Dorsolateral prefrontal cortex (tissue), 120 donors: ENCODE measurements at regions of chr7 and their contacts with region 1.

Region 1: DNA sequence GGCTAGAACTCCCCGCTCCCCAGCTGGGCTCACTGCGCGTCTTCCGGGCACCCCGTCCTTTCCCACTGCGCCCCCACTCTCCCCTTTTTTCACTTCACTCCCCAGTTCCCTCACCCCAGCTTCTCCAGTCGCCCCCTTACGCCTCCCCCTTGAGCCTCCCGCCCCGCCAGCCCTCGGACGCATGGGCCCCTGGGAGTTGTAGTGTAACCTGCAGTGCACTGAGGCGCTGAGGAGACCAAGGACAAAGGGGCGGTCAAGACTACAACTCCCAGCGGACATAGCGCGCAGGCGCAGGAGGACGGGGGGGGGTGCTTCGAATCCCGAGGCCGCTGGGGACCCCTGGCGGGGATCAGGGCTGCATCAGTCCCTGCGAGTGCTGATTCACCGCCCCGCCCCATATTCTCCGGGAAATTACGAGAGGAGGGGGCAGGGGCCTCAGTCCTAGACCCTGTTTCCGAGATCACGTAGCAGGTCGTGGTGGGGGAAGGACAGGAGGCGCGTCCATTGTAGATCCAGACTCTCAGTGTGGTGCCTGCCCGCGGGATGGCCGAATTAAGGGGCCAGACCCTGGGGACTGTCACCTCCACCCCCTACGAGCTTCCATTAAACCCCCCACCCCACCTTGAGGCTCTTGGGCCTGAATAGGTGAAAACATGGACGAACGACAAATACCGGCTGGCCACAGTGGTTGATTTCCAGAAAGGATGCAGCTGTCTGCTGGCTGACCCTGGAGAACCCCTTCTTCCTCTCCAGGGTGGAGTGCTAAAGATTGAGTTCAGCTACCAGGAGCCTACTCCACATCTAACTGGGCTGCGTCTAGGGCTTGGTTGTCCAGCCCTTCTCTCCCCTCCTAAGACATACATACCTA is 554 bp upstream of the YWHAG start:
- DNase-seq: peak; percentile 93 to 99 (median 98)
- H3K4me3 ChIP-seq: peak overlapping the region; percentile 64 to 100 (median 94)
- H3K27ac ChIP-seq: peak overlapping the region; percentile 88 to 100 (median 98)
- H3K27me3 ChIP-seq: no peaks in the 10 kb centered on the region
- CTCF ChIP-seq: peak; percentile 37 to 93 (median 78)

Region 2: GRCh38 chr7:76291343-76292212 is 67.8 kb before region 1 on chr7:
- intact Hi-C with region 1: loop called in 1 of 2 experiments (anchors 2 kb)
- DNase-seq: peak; percentile 86 to 92 (median 90)
- H3K4me3 ChIP-seq: peak overlapping the region; percentile 4 to 65 (median 46)
- H3K27ac ChIP-seq: peak overlapping the region; percentile 68 to 100 (median 100)
- H3K27me3 ChIP-seq: no peaks in the 10 kb centered on the region
- CTCF ChIP-seq: peak; percentile 35 to 100 (median 97)

Region 3: GRCh38 chr7:76314042-76314721 is 45.2 kb before region 1 on chr7:
- intact Hi-C with region 1: loop called (anchors 1 kb)
- DNase-seq: peak; percentile 93 to 97 (median 96)
- H3K4me3 ChIP-seq: peak overlapping the region in 2 of 59 donors; percentile 6 to 27
- H3K27ac ChIP-seq: peak overlapping the region in 24 of 59 donors; percentile 1 to 81 (median 41)
- H3K27me3 ChIP-seq: no peaks in the 10 kb centered on the region
- CTCF ChIP-seq: peak; percentile 79 to 100 (median 100)

Region 4: DNA sequence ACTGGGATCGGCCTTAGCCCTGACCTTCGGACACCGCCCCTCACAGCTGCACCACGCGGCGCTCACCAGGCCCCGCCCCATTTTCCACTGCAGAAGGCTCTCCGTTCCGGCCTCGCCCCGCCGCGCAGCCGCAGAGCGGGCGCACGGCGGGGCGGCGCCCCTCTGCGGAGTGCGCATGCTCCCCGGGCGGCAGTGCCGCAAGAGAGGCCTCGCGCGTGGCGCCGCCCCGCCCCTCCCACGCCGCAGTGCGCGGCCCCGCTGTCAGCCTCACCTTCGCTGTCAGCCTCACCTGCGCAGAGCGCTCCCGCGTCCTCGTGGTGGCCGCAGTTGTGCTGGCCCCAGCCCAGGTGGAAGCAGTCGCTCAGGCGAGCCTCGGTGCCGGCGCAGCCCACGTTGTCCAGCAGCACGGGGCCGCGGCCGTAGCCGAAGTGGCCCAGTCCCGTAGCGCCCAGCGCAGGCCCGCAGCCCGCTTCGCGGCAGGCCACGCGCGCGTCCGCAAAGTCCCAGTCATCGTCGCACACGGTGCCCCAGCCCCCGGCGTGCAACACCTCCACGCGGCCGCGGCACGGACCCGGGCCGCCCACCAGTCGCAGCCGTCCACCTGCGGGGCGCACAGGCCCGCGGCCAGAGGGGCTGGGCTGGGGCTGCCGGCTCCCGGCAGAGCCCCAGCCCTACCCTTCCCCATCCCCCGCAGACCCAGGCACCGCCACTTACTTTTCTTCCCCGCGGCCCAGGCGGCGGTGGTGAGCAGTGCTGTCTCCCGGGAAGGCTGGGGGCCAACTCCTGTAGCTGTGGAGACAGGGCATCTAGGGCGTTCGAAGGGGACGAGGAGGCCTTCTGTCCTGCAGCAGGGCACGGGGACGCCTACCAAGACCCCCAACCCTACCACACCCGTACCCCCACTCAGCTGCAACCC is 34.0 kb after region 1 on chr7:
- intact Hi-C with region 1: loop called (anchors 1 to 2 kb)
- DNase-seq: peak; percentile 80 to 93 (median 90)
- H3K4me3 ChIP-seq: peak overlapping the region; percentile 49 to 96 (median 79)
- H3K27ac ChIP-seq: peak overlapping the region; percentile 45 to 99 (median 94)
- H3K27me3 ChIP-seq: no peaks in the 10 kb centered on the region
- CTCF ChIP-seq: peak in 19 of 56 donors; percentile 3 to 43 (median 19)

Region 5: DNA sequence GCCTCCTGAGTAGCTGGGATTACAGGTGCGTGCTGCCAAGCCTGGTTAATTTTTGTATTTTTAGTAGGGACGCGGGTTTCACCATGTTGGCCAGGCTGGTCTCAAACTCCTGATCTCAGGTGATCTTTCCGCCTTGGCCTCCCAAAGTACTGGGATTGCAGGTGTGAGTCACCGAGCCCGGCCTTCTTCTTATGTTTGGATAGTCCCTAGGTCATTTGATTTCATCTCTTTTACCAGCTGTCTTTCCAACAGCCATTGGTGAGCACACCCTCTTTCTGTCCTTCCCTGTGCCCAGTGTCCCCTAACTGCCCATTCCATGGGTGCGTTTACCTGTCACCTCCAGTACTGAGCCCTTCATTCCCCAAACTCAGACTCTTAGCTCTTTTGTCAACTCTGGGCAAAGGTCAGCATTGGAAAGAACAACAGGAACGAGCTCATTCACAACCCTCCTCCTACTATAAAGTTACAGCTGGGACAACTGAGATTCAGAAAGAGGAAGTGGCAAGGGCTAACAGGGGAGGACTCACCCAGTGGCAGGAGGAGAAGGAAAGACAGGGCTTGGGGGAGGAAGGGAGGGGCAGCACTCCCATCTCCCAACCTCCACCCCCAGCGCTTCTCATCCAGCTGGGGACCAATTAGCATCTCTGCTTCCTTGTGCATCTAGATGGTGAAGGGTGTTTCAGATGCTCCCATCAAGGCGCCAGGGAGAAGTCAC is 44.6 kb after region 1 on chr7:
- intact Hi-C with region 1: no loop called
- DNase-seq: no peak
- H3K4me3 ChIP-seq: no peak overlapping the region
- H3K27ac ChIP-seq: no peak overlapping the region
- H3K27me3 ChIP-seq: no peaks in the 10 kb centered on the region
- CTCF ChIP-seq: no peak